Caco-2 (cell line): ENCODE measurements at regions of chr2 and their contacts with region 1.

Region 1: GRCh38 chr2:65186872-65187851 is 40.5 kb upstream of the ACTR2 start:
- DNase-seq: peak; percentile 83 to 90
- H3K4me3 ChIP-seq: no peak overlapping the region
- H3K4me3 Mint-ChIP-seq: no peak overlapping the region
- H3K27ac Mint-ChIP-seq: no peak overlapping the region
- H3K4me1 ChIP-seq: peaks cover 14% of the 10 kb centered on the region
- H3K4me1 Mint-ChIP-seq: peaks cover 14% of the 10 kb centered on the region
- H3K27me3 ChIP-seq: no peaks in the 10 kb centered on the region
- H3K27me3 Mint-ChIP-seq: peaks cover 4% of the 10 kb centered on the region
- CTCF ChIP-seq: peak; percentile 85 to 86

Region 2: GRCh38 chr2:64622443-64623241 is 564.5 kb before region 1 on chr2:
- CTCF ChIA-PET with region 1: no interaction called
- POLR2A ChIA-PET with region 1: no interaction called
- intact Hi-C with region 1: no loop called
- DNase-seq: no peak
- H3K4me3 ChIP-seq: no peak overlapping the region
- H3K4me3 Mint-ChIP-seq: no peak overlapping the region
- H3K27ac Mint-ChIP-seq: peak overlapping the region; percentile 16
- H3K4me1 ChIP-seq: no peaks in the 10 kb centered on the region
- H3K4me1 Mint-ChIP-seq: peaks cover 7% of the 10 kb centered on the region
- H3K27me3 ChIP-seq: no peaks in the 10 kb centered on the region; the same call in 1 of the 2 replicates
- H3K27me3 Mint-ChIP-seq: no peaks in the 10 kb centered on the region
- CTCF ChIP-seq: no peak

Region 3: GRCh38 chr2:65064728-65065552 is 122.2 kb before region 1 on chr2:
- CTCF ChIA-PET with region 1: interaction called, 27 read pairs
- POLR2A ChIA-PET with region 1: no interaction called
- intact Hi-C with region 1: loop called (anchors 1 kb)
- DNase-seq: peak in 1 of 2 experiments; percentile 42
- H3K4me3 ChIP-seq: no peak overlapping the region
- H3K4me3 Mint-ChIP-seq: no peak overlapping the region
- H3K27ac Mint-ChIP-seq: no peak overlapping the region
- H3K4me1 ChIP-seq: peaks cover 5% of the 10 kb centered on the region; the same call in 1 of the 2 replicates
- H3K4me1 Mint-ChIP-seq: no peaks in the 10 kb centered on the region
- H3K27me3 ChIP-seq: no peaks in the 10 kb centered on the region
- H3K27me3 Mint-ChIP-seq: no peaks in the 10 kb centered on the region
- CTCF ChIP-seq: peak; percentile 47 to 82

Region 4: DNA sequence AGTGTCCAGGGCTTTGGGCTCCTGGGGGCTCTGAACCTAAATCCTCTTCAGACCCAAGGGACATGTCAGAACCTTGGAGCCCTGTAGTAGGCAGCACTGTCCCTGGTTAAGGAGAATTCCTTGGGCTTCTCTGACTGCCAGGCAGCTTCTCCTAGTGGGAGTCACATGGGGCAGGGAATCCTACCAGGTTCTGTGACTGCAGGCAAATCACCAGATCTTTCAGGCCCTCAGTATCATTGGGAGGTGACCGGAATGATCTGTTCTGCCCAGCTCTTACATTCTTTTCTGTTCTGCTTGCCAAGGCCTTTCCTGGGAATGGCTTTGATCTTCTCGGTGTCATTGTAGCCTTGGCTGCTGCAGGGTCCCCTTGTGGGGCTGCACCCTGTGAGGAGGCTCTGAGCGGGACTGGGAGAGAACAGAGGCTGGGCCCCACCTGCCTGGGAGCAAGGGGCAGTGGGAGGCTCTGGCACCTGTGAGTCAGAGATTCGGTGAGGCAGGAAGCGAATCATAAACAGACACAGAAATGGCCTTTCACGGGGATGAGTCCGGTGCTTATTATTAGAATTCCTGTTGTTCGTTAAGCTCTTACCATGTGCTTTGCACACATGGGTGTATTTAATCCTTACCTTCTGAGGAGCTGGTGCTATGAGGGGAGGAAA is 116.9 kb before region 1 on chr2:
- CTCF ChIA-PET with region 1: interaction called, 27 read pairs
- POLR2A ChIA-PET with region 1: no interaction called
- intact Hi-C with region 1: no loop called
- DNase-seq: no peak
- H3K4me3 ChIP-seq: no peak overlapping the region
- H3K4me3 Mint-ChIP-seq: no peak overlapping the region
- H3K27ac Mint-ChIP-seq: no peak overlapping the region
- H3K4me1 ChIP-seq: no peaks in the 10 kb centered on the region
- H3K4me1 Mint-ChIP-seq: no peaks in the 10 kb centered on the region
- H3K27me3 ChIP-seq: no peaks in the 10 kb centered on the region
- H3K27me3 Mint-ChIP-seq: no peaks in the 10 kb centered on the region
- CTCF ChIP-seq: no peak